ENCODE measurements at regions of chr1 and their contacts with region 1.

Region 1: DNA sequence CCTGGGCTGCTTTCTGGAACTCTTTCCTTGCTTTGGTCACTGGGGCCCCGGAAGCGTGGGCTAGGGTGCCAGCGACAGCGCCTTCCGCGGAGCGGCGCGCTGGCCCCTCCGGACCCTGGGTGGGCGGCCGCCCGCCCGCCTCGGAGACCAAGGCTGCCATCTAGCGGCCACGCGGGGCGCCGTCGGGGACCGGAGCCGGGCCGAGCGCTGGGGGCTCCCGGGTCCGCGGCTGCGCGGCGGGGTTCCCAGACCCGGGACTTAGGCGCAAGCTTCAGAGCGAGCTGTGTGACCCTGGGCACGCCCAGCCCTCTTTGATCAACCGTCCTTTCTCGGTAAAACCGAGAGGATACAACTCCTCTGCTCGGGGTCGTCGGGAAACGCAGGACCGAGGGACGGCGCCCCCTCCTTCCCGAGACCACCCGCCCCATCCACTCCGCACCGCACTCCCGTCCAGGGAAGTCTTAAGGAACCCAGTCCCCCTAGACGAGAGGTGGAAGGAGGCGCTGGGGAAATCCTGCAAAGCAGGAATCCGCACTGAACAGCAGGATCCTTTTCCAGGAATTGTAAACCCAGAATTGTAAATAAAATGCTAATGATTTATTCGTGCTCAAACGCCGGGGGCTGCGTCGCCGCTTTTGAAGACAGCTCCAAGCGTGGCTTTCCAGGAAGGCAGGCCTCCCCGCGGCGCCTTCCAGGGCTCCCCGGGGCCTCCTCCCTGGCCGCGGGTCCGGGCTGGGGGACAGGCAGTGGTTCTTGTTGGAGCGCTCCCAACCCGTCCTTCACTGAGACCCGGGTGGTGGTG is 41.2 kb downstream of the RRAGC start:
- DNase-seq: no peak
- H3K4me3 ChIP-seq: peak overlapping the region in 1 of 2 donors; percentile 11
- H3K27ac ChIP-seq: no peak overlapping the region
- H3K4me1 ChIP-seq: peaks cover 0 to 15% (median 9%) of the 10 kb centered on the region in 4 donors
- H3K27me3 ChIP-seq: peaks cover 2 to 77% of the 10 kb centered on the region in 2 donors
- CTCF ChIP-seq: peak; percentile 63 to 68

Region 2: DNA sequence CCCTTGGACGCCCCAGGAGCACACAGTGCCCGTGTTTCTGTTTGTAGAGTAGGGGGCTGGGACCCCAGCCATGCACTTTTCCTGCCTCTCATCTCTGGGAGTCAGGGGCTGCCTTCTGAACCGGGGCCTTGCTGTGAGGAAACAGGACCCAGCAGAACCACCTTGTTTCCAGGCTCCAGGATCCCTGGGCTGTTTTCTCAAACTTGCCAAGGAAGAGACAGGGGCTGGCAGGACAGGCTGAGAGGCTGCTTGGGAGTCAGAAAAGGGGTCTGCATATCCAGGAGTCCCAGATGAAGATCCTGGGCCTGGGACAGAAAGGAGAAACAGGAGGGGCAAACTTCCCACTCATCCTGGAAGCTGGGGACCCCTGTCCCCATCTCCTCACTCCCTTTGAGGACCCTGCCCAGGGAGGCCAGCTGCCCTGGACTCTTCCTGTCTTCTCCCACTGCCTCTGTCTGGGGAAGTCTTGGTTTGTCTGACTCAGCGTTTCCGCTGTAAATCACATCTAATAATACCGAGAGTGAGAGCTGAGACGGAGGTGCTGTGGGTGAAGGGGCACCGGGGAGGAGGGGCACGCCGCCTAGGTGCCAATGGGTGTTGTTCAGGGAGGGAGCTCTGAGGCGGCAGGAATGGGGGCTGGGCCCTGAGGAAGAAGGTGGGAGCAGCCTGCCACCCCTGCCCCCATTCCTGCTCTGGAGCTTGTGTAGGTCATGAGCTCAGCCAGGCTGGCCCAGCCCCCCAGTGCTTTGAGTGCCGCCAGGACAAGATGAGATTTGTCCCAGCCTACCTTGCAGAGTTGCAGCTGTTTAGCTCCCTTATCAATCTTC is 788.5 kb before region 1 on chr1:
- intact Hi-C with region 1: loop called (anchors 10 kb)
- DNase-seq: no peak
- H3K4me3 ChIP-seq: no peak overlapping the region
- H3K27ac ChIP-seq: no peak overlapping the region
- H3K4me1 ChIP-seq: peaks cover 0 to 27% (median 19%) of the 10 kb centered on the region in 4 donors
- H3K27me3 ChIP-seq: peaks cover 0 to 13% of the 10 kb centered on the region in 2 donors
- CTCF ChIP-seq: no peak

Region 3: DNA sequence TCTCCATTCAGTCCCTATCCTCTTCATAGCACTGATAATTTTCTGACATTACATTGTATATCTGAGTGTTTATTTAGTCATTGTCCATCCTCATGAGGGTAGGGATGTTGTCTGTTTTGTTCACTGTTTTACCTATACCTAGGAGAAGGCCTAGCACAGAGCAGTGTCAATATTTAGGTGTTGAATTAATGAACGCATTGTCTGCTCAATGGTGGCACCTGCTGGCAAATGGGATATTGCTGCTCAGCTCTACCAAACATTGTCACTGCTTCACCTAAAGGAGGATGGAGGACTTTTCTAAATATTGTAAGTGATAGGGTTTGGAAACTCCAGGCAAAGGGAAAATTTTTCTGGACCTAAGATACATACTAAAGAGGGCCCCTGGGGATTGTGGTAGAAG is 202.7 kb before region 1 on chr1:
- intact Hi-C with region 1: loop called (anchors 10 kb)
- DNase-seq: no peak
- H3K4me3 ChIP-seq: no peak overlapping the region
- H3K27ac ChIP-seq: no peak overlapping the region
- H3K4me1 ChIP-seq: no peaks in the 10 kb centered on the region
- H3K27me3 ChIP-seq: peaks cover 0 to 20% of the 10 kb centered on the region in 2 donors
- CTCF ChIP-seq: no peak

Measured in tibial artery (tissue), 4 donors.